SK-N-SH (cell line): ENCODE measurements at regions of chr1 and their contacts with region 1.

Region 1: DNA sequence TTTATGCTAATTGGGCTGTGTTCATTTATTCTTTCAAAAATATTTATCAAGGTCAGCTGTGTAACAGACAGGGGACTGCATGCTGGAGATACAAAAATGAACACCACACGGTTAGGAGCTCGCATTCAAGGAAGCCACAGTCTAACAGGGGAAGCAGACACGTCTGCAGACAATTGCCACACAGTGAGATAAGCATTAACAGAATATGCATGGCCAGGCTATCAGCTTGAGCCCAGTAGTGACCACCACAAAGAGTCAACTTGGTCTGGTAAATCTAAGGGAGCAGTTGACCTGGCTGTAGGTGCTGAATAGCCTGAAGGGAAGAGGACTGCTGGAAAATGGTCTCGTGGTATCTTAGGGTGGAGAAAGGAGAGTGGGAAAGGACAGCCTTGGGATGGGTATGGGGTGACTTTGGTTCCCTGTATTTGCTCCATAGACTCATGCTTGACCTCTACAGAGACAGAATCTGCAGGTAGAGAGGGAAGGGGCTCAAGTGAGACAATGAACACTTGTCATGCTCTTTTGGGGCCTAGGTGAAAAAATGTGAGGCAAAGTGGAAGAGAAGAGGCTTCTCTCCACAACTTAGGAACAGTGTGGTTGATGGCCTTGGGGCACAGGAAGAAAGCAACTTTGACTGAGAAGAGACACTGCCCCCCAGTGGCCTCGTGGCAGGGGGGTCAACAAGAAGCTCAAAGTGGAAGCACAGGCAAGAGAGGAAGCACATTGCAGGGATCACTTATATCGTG is 7.6 kb upstream of the NPL start:
- DNase-seq: peak; percentile 45
- H3K4me3 ChIP-seq: no peak overlapping the region; a peak in 1 of 4 replicates
- H3K27ac ChIP-seq: peak overlapping the region in 1 of 2 experiments; percentile 68; a peak in 2 of 4 replicates
- H3K4me1 ChIP-seq: peaks cover 0 to 11% of the 10 kb centered on the region in 2 experiments; a peak in 2 of 4 replicates
- H3K27me3 ChIP-seq: no peaks in the 10 kb centered on the region
- CTCF ChIP-seq: peak; percentile 63
- EP300 ChIP-seq: no peak
- RAD21 ChIP-seq: peak; percentile 83

Region 2: DNA sequence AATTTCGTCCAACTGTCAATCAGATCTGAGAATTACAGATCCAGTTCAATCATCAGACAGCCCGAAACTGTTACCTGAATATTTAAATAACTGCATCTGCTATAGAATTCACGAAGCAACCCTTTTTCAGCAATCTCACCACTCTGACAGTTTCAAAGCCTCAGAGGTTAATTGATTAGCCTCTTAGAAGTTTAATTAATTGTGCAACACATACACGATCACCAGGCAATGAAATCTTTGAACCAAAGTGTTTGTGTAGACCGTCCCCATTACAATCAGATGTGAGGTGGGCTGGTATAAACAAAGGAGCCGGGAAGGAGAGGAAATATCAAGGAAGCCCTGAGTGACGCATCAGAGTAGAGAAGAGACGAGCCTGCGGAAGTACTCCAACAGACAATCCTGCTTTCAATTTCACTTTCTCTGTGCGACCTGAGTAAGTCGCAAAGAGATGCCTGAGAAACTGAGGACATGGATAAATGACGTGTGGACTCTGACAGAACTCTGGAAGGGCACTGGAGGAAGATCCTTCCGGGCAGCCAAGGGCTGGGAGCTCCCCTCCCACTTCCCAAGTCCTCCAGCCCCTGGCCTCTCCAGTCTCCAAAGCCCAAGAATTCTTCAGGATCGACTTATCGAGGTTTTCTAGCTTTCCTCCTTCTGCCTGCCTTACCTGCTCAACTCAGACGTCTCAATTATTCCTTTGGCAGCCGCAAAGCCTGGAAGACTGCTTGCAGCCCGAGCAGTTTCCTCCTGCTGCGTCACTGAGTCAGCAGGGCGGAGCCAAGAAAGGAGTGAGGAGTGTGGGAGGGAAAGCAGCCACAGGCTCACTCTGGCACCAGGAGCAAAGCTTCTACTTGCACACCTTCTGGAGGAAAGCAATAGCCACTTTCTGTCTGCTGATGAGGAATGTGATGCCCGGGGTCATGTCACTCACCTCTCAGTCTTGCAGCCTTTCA is 193.2 kb before region 1 on chr1 and contains the start of gene RNASEL:
- CTCF ChIA-PET with region 1: interaction called, 829 read pairs
- POLR2A ChIA-PET with region 1: no interaction called
- DNase-seq: no peak
- H3K4me3 ChIP-seq: no peak within 1 kb of the TSS
- H3K27ac ChIP-seq: no peak within 1 kb of the TSS
- H3K4me1 ChIP-seq: no peaks in the 10 kb centered on the region
- H3K27me3 ChIP-seq: no peaks in the 10 kb centered on the region; the same call in 1 of the 2 replicates
- CTCF ChIP-seq: no peak
- EP300 ChIP-seq: no peak
- RAD21 ChIP-seq: no peak
- polyA plus RNA-seq, gene RNASEL: not detected in 2 replicates

Region 3: DNA sequence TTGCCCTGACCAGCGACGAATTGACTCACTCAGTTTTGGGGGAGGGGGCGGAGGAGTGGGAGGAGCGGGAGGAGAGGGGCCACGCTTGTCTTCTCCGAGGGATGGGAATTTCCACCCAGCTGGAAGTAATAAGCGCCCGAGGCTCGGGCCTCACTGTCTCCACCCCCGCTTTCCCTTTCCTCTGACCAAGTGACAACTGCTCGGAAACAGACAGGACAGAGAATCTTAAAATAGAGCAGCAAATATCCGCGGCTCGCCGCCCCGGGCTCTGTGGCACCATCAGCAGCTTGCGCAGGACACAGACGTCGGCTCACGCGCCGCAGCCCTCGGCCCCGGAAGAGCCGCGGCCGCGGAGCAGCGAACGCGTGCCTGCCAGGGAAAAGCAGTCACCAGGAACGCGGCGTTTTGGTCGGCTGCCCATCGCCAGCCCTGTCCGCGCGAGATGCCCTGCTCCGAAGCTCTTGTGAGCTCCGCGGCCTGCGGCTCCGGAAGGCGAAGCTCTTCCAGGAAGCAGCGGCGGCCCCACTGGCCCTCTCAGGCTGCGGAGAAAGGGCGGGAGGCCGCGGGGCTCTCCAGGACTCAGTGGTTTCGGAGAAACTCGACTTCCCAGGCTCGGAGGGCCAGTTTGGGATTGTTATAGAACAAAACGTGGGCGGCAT is 167.1 kb before region 1 on chr1:
- CTCF ChIA-PET with region 1: interaction called, 26 read pairs
- POLR2A ChIA-PET with region 1: interaction called, 4 read pairs
- DNase-seq: peak; percentile 85
- H3K4me3 ChIP-seq: peak overlapping the region; percentile 45 to 53
- H3K27ac ChIP-seq: peak overlapping the region; percentile 60 to 90
- H3K4me1 ChIP-seq: peaks cover 18 to 21% of the 10 kb centered on the region in 2 experiments
- H3K27me3 ChIP-seq: no peaks in the 10 kb centered on the region
- CTCF ChIP-seq: no peak
- EP300 ChIP-seq: peak in 1 of 2 experiments; percentile 47; a peak in 1 of 4 replicates
- RAD21 ChIP-seq: no peak

Region 4: GRCh38 chr1:182677397-182678098 is 104.5 kb before region 1 on chr1:
- CTCF ChIA-PET with region 1: interaction called, 38 read pairs
- POLR2A ChIA-PET with region 1: no interaction called
- DNase-seq: no peak
- H3K4me3 ChIP-seq: no peak overlapping the region
- H3K27ac ChIP-seq: no peak overlapping the region
- H3K4me1 ChIP-seq: peaks cover 2 to 6% of the 10 kb centered on the region in 2 experiments; a peak in 2 of 4 replicates
- H3K27me3 ChIP-seq: peaks cover 5% of the 10 kb centered on the region; the same call in 1 of the 2 replicates
- CTCF ChIP-seq: no peak
- EP300 ChIP-seq: no peak
- RAD21 ChIP-seq: no peak

Region 5: GRCh38 chr1:182761396-182762395 is 20.3 kb before region 1 on chr1:
- CTCF ChIA-PET with region 1: interaction called, 52 read pairs
- POLR2A ChIA-PET with region 1: no interaction called
- DNase-seq: peak; percentile 27
- H3K4me3 ChIP-seq: no peak overlapping the region
- H3K27ac ChIP-seq: peak overlapping the region in 1 of 2 experiments; percentile 68; a peak in 1 of 4 replicates
- H3K4me1 ChIP-seq: peaks cover 0 to 26% of the 10 kb centered on the region in 2 experiments; a peak in 2 of 4 replicates
- H3K27me3 ChIP-seq: no peaks in the 10 kb centered on the region
- CTCF ChIP-seq: no peak
- EP300 ChIP-seq: peak in 1 of 2 experiments; percentile 63; a peak in 2 of 4 replicates
- RAD21 ChIP-seq: no peak

Region 6: GRCh38 chr1:182795563-182796228 is 13.7 kb after region 1 on chr1:
- CTCF ChIA-PET with region 1: interaction called, 14 read pairs
- POLR2A ChIA-PET with region 1: no interaction called
- DNase-seq: no peak
- H3K4me3 ChIP-seq: no peak overlapping the region
- H3K27ac ChIP-seq: no peak overlapping the region
- H3K4me1 ChIP-seq: peaks cover 0 to 2% of the 10 kb centered on the region in 2 experiments; a peak in 1 of 4 replicates
- H3K27me3 ChIP-seq: peaks cover 3% of the 10 kb centered on the region; the same call in 1 of the 2 replicates
- CTCF ChIP-seq: no peak
- EP300 ChIP-seq: no peak
- RAD21 ChIP-seq: no peak